HAP-1 (cell line): ENCODE measurements at regions of chr4 and their contacts with region 1.

Region 1: DNA sequence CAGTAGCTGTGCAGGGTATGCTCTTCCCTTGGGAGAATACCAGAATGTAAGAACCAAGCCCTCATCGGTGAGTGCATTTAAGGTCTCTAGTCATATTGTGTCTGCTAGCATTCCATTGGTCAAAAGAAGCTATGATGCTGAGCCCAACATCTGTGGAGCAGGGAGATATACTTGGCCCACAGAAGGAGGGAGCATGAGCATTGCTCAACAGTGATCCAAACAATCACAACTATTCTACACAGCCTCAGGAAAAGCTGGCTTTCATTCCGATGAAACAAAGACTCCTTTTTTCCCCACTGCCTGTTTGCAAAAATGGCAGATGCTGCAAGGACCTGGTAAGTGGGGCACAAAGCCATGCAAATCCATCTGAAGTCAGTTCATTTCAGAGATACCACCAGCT is 80.6 kb upstream of the DHX15 start:
- DNase-seq: no peak
- H3K4me3 ChIP-seq: no peak overlapping the region
- H3K4me1 ChIP-seq: peaks cover 29% of the 10 kb centered on the region
- H3K27me3 ChIP-seq: no peaks in the 10 kb centered on the region

Region 2: DNA sequence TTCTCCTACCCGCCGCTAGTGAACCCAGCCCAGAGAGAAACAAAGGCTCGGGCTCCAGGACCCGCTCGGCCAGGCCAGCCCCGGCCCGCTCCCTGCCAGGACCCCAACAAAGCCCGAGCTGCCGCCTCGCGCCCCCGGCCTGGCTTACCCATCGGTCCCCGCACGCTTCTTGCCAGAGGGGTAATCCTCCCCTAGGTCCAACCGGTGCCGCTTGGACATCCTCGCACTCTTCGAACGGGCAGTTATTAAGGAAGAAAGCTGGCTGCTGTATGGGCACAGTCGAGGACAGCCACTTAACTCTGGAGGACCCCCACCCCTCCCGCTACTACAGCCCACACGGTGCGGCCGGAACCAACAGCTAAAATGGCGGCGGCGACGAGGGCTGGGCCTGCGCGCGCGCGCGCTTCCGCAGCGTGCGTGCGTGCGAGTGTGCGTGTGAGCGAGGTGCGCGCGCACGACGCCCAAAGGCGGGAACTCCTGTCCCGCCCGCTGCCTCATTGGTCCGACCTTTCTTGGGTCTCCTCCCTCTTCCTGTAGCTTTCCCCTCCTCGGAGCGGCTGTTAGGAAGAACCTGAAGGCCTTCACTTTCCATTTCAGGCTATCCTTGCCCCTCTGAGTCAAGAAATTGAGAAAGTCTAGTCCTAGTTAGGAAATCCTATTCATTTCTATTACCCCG is 80.6 kb before region 1 on chr4 and contains the start of gene DHX15:
- in situ Hi-C with region 1: loop called (anchors 5 kb)
- DNase-seq: peak; percentile 94 to 95
- H3K4me3 ChIP-seq: peak within 1 kb of the TSS; percentile 77
- H3K4me1 ChIP-seq: peaks cover 12% of the 10 kb centered on the region
- H3K27me3 ChIP-seq: no peaks in the 10 kb centered on the region